Activated T-helper 1 cell treated with anti-CD3 and anti-CD28 coated beads, Interleukin-12 subunit alpha, Interleukin-12 subunit beta, Interleukin-2, Interleukin-4 antibody, amounts not matched to agents 30 ng/mL and 10 ng/mL and 1 ng/mL, durations not matched to agents 14 hours and 24 hours and 36 hours (primary cell): ENCODE measurements at regions of chr18 and their contacts with region 1.

Region 1: DNA sequence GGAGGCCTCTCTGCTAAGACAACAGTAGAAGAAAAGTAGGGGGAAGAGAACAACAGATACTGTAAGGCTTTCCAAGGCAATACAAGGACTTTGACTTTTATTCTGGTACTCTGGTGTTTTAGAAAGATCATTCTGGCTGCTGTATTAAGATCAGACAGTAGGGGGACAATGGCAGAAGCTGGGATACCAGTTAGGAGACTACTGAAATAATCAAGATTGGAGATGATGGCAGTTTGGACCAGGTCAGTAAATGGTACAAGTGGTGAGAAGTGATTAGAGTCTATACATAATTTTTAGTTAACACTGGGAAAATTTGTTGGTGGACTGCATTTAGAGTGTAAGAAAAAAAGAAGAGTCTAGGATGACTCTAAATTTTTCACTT is 139.7 kb downstream of the ROCK1 start:
- DNase-seq: no peak
- H3K4me3 Mint-ChIP-seq: no peak overlapping the region
- H3K27ac Mint-ChIP-seq: no peak overlapping the region
- H3K4me1 Mint-ChIP-seq: no peaks in the 10 kb centered on the region
- H3K27me3 Mint-ChIP-seq: no peaks in the 10 kb centered on the region

Region 2: DNA sequence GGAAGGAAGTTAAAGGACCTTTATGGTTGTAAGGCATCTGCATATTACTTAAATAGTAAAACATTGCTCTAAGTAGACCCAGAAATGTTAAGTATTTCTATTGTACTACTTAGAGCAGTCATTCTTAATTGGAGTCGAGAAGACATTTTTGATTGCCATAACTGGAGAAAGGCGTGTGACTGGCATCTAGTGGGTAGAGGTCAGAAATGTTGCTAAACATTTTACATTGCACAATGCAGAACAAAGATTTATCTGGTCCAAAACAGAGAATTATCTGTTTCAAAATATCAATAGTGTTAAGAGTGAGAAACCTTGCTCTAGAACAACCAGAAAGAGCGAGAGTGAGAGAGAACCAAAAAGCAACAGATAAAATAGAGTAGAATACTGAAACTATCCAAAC is 163.0 kb after region 1 on chr18:
- intact Hi-C with region 1: loop called (anchors 1 kb)
- DNase-seq: no peak
- H3K4me3 Mint-ChIP-seq: no peak overlapping the region
- H3K27ac Mint-ChIP-seq: no peak overlapping the region
- H3K4me1 Mint-ChIP-seq: no peaks in the 10 kb centered on the region
- H3K27me3 Mint-ChIP-seq: peaks cover 3% of the 10 kb centered on the region

Region 3: GRCh38 chr18:21179590-21180220 is 207.8 kb after region 1 on chr18:
- intact Hi-C with region 1: loop called (anchors 1 kb)
- DNase-seq: peak; percentile 13
- H3K4me3 Mint-ChIP-seq: no peak overlapping the region
- H3K27ac Mint-ChIP-seq: no peak overlapping the region
- H3K4me1 Mint-ChIP-seq: no peaks in the 10 kb centered on the region
- H3K27me3 Mint-ChIP-seq: peaks cover 5% of the 10 kb centered on the region